H1 (cell line): ENCODE measurements at regions of chr9 and their contacts with region 1.

Region 1: GRCh38 chr9:5186416-5187169 is 1.2 kb upstream of the INSL6 start:
- DNase-seq: peak in 1 of 2 experiments; percentile 25
- H3K4me3 ChIP-seq: no peak overlapping the region
- H3K27ac ChIP-seq: no peak overlapping the region
- H3K4me1 ChIP-seq: no peaks in the 10 kb centered on the region
- H3K27me3 ChIP-seq: no peaks in the 10 kb centered on the region
- CTCF ChIP-seq: peak; percentile 55 to 82 (median 80)
- EP300 ChIP-seq: no peak
- POLR2A ChIP-seq: no peak
- RAD21 ChIP-seq: peak; percentile 93

Region 2: DNA sequence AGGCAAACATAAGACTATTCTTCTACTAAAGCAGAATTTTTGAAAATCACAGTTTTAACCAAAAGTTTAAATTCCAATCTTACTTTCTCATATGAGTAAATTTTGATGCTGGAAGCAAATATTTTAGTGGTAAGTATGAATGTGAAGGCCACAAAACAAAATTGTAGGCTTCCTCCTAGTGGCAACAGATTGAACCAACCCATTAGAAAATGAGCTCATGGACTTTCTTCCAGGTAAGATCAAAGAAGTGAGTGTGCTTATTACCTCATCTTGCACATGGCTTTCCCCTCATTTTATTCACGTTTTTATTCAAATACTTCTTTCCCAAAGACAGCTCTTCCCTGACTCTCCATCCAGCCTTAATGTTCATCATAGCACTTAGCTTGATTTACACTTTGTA is 134.5 kb after region 1 on chr9:
- CTCF ChIA-PET with region 1: interaction called, 10 read pairs
- POLR2A ChIA-PET with region 1: no interaction called
- DNase-seq: no peak
- H3K4me3 ChIP-seq: no peak overlapping the region
- H3K27ac ChIP-seq: no peak overlapping the region
- H3K4me1 ChIP-seq: no peaks in the 10 kb centered on the region; a peak in 1 of 7 replicates
- H3K27me3 ChIP-seq: no peaks in the 10 kb centered on the region
- CTCF ChIP-seq: no peak; a peak in 1 of 4 replicates
- EP300 ChIP-seq: no peak
- POLR2A ChIP-seq: no peak
- RAD21 ChIP-seq: no peak

Region 3: GRCh38 chr9:5425006-5425628 is 238.5 kb after region 1 on chr9:
- CTCF ChIA-PET with region 1: interaction called, 23 read pairs
- POLR2A ChIA-PET with region 1: no interaction called
- DNase-seq: no peak
- H3K4me3 ChIP-seq: no peak overlapping the region
- H3K27ac ChIP-seq: no peak overlapping the region
- H3K4me1 ChIP-seq: no peaks in the 10 kb centered on the region
- H3K27me3 ChIP-seq: no peaks in the 10 kb centered on the region
- CTCF ChIP-seq: peak in 2 of 3 experiments; percentile 52 to 64; a peak in 2 of 4 replicates
- EP300 ChIP-seq: no peak
- POLR2A ChIP-seq: no peak
- RAD21 ChIP-seq: peak; percentile 77

Region 4: GRCh38 chr9:5430915-5431314 is 244.3 kb after region 1 on chr9:
- CTCF ChIA-PET with region 1: interaction called, 18 read pairs
- POLR2A ChIA-PET with region 1: no interaction called
- DNase-seq: no peak
- H3K4me3 ChIP-seq: no peak overlapping the region
- H3K27ac ChIP-seq: no peak overlapping the region
- H3K4me1 ChIP-seq: no peaks in the 10 kb centered on the region
- H3K27me3 ChIP-seq: no peaks in the 10 kb centered on the region
- CTCF ChIP-seq: peak in 1 of 3 experiments; percentile 19; a peak in 1 of 4 replicates
- EP300 ChIP-seq: no peak
- POLR2A ChIP-seq: no peak
- RAD21 ChIP-seq: no peak

Region 5: GRCh38 chr9:5442400-5443011 is 255.9 kb after region 1 on chr9:
- CTCF ChIA-PET with region 1: interaction called, 39 read pairs
- POLR2A ChIA-PET with region 1: no interaction called
- DNase-seq: peak in 1 of 2 experiments; percentile 49
- H3K4me3 ChIP-seq: no peak overlapping the region
- H3K27ac ChIP-seq: no peak overlapping the region
- H3K4me1 ChIP-seq: peaks cover 0 to 6% (median 2%) of the 10 kb centered on the region in 4 experiments; a peak in 3 of 7 replicates
- H3K27me3 ChIP-seq: no peaks in the 10 kb centered on the region
- CTCF ChIP-seq: peak in 2 of 3 experiments; percentile 58 to 60; a peak in 3 of 4 replicates
- EP300 ChIP-seq: no peak
- POLR2A ChIP-seq: no peak
- RAD21 ChIP-seq: peak; percentile 64 to 74

Region 6: GRCh38 chr9:5582835-5583195 is 396.2 kb after region 1 on chr9:
- CTCF ChIA-PET with region 1: interaction called, 10 read pairs
- POLR2A ChIA-PET with region 1: no interaction called
- DNase-seq: no peak
- H3K4me3 ChIP-seq: no peak overlapping the region
- H3K27ac ChIP-seq: no peak overlapping the region
- H3K4me1 ChIP-seq: no peaks in the 10 kb centered on the region
- H3K27me3 ChIP-seq: no peaks in the 10 kb centered on the region
- CTCF ChIP-seq: no peak
- EP300 ChIP-seq: no peak
- POLR2A ChIP-seq: no peak
- RAD21 ChIP-seq: no peak

Region 7: GRCh38 chr9:5593904-5594303 is 407.3 kb after region 1 on chr9:
- CTCF ChIA-PET with region 1: interaction called, 16 read pairs
- POLR2A ChIA-PET with region 1: no interaction called
- DNase-seq: no peak
- H3K4me3 ChIP-seq: no peak overlapping the region
- H3K27ac ChIP-seq: no peak overlapping the region
- H3K4me1 ChIP-seq: no peaks in the 10 kb centered on the region
- H3K27me3 ChIP-seq: no peaks in the 10 kb centered on the region
- CTCF ChIP-seq: no peak
- EP300 ChIP-seq: no peak
- POLR2A ChIP-seq: no peak
- RAD21 ChIP-seq: no peak